Naive thymus-derived CD8-positive, alpha-beta T cell (primary cell): ENCODE measurements at regions of chr9 and their contacts with region 1.

Region 1: DNA sequence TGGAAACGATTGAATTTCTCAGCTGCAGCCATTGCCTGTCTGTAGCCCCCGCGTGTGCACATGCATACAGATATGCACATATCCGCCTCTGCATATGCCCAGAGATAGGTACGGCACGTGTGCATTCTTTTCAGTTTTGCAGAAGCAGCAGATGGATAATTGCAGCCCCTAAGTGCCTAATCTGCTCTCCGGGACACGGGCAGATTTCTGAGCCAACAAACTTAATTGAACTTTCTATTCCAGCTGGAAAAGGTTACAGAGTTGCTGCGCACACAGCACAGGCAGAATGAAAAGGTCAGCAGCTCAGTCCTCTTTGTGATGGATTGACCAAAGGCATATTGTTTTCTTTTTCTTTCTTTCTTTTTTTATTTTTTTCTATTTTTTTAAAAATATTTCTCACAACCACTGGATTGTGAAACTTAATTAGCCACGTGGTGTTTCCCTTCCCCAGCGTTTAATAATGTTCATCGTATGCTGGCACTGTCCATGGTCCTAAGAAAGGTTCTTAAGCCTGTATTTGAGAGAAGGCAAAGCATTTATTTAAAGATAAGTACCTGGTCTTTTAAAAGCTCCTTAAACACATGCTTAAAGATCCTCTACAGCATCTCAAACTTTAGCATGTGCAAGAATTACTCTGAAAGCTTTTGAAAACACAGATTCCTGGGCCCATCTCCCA is 270.2 kb upstream of the BRINP1 start:
- DNase-seq: no peak
- ATAC-seq: no peak
- H3K4me3 Mint-ChIP-seq: no peak overlapping the region
- H3K27ac Mint-ChIP-seq: no peak overlapping the region
- H3K4me1 Mint-ChIP-seq: no peaks in the 10 kb centered on the region
- H3K27me3 Mint-ChIP-seq: no peaks in the 10 kb centered on the region

Region 2: GRCh38 chr9:119609277-119609971 is 30.0 kb before region 1 on chr9:
- POLR2A ChIA-PET with region 1: interaction called, 14 read pairs
- DNase-seq: no peak
- ATAC-seq: no peak
- H3K4me3 Mint-ChIP-seq: no peak overlapping the region
- H3K27ac Mint-ChIP-seq: no peak overlapping the region
- H3K4me1 Mint-ChIP-seq: no peaks in the 10 kb centered on the region
- H3K27me3 Mint-ChIP-seq: peaks cover 0 to 10% (median 0%) of the 10 kb centered on the region in 5 donors

Region 3: GRCh38 chr9:119689879-119690278 is 50.5 kb after region 1 on chr9:
- POLR2A ChIA-PET with region 1: no interaction called
- DNase-seq: no peak
- ATAC-seq: no peak
- H3K4me3 Mint-ChIP-seq: no peak overlapping the region
- H3K27ac Mint-ChIP-seq: no peak overlapping the region
- H3K4me1 Mint-ChIP-seq: no peaks in the 10 kb centered on the region
- H3K27me3 Mint-ChIP-seq: peaks cover 0 to 5% (median 2%) of the 10 kb centered on the region in 5 donors